AG04449 (cell line): ENCODE measurements at regions of chr18 and their contacts with region 1.

Region 1: GRCh38 chr18:58135701-58136331 is 91.8 kb downstream of the NEDD4L start:
- DNase-seq: no peak
- H3K4me3 ChIP-seq: no peak overlapping the region
- CTCF ChIP-seq: peak; percentile 71

Region 2: DNA sequence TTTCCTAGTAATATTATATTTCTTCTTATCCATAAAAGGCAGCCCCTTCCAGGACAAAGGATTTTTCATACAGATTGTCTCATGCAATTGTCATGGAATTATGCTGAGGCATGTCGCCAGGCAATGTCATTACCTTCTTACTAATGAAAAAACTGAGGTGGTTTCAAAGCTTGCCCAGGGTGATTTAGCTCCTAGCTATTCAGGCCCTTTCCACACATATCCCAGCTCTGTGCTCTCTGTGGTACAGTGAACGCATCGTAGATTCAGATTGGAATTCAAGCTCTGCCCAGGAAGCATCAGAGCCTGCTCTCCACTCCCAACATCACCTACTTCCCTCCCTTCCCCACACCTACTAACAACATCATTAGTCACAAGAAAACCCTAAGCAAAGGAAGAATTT is 392.8 kb before region 1 on chr18:
- CTCF ChIA-PET with region 1: no interaction called
- POLR2A ChIA-PET with region 1: no interaction called
- DNase-seq: peak; percentile 69
- H3K4me3 ChIP-seq: no peak overlapping the region
- CTCF ChIP-seq: no peak

Region 3: DNA sequence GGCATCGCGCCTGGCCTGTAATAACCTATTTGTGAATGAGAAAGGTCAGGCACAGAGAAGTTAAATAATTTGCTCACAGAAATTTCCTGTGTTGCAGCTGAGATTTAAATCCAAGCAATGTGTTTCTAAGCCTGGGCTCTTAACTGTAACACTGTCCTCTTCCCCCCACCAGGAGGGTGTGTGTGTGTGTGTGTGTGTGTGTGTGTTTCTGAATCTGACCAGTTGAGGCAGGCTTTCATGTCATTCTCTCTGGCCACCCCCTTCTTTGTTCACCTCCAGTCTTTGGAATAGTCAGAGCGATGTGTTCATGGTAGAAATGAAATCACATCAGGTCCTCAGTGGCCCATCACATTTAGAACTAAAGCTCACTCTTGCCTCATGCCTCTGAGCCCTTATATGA is 10.6 kb before region 1 on chr18:
- CTCF ChIA-PET with region 1: interaction called, 80 read pairs
- POLR2A ChIA-PET with region 1: no interaction called
- DNase-seq: no peak
- H3K4me3 ChIP-seq: no peak overlapping the region
- CTCF ChIP-seq: no peak